SK-N-SH (cell line): ENCODE measurements at regions of chr3 and their contacts with region 1.

Region 1: GRCh38 chr3:76107935-76108570 is 322.7 kb upstream of the ZNF717 start:
- DNase-seq: peak; percentile 48
- H3K4me3 ChIP-seq: no peak overlapping the region; a peak in 1 of 4 replicates
- H3K27ac ChIP-seq: no peak overlapping the region
- H3K4me1 ChIP-seq: no peaks in the 10 kb centered on the region
- H3K27me3 ChIP-seq: no peaks in the 10 kb centered on the region
- CTCF ChIP-seq: peak; percentile 84
- EP300 ChIP-seq: no peak
- RAD21 ChIP-seq: peak; percentile 77

Region 2: GRCh38 chr3:75951941-75952340 is 156.1 kb before region 1 on chr3:
- CTCF ChIA-PET with region 1: no interaction called
- POLR2A ChIA-PET with region 1: no interaction called
- DNase-seq: no peak
- H3K4me3 ChIP-seq: no peak overlapping the region
- H3K27ac ChIP-seq: no peak overlapping the region
- H3K4me1 ChIP-seq: no peaks in the 10 kb centered on the region
- H3K27me3 ChIP-seq: no peaks in the 10 kb centered on the region
- CTCF ChIP-seq: no peak
- EP300 ChIP-seq: no peak
- RAD21 ChIP-seq: no peak

Region 3: GRCh38 chr3:76122007-76122406 is 14.0 kb after region 1 on chr3:
- CTCF ChIA-PET with region 1: interaction called, 11 read pairs
- POLR2A ChIA-PET with region 1: no interaction called
- DNase-seq: no peak
- H3K4me3 ChIP-seq: no peak overlapping the region
- H3K27ac ChIP-seq: no peak overlapping the region
- H3K4me1 ChIP-seq: no peaks in the 10 kb centered on the region
- H3K27me3 ChIP-seq: no peaks in the 10 kb centered on the region
- CTCF ChIP-seq: no peak
- EP300 ChIP-seq: no peak
- RAD21 ChIP-seq: no peak

Region 4: GRCh38 chr3:76866729-76867408 is 758.8 kb after region 1 on chr3:
- CTCF ChIA-PET with region 1: no interaction called
- POLR2A ChIA-PET with region 1: no interaction called
- DNase-seq: no peak
- H3K4me3 ChIP-seq: no peak overlapping the region
- H3K27ac ChIP-seq: no peak overlapping the region
- H3K4me1 ChIP-seq: no peaks in the 10 kb centered on the region
- H3K27me3 ChIP-seq: no peaks in the 10 kb centered on the region
- CTCF ChIP-seq: no peak
- EP300 ChIP-seq: no peak
- RAD21 ChIP-seq: no peak